Activated naive CD4-positive, alpha-beta T cell treated with anti-CD3 and anti-CD28 coated beads for 36 hours (primary cell): ENCODE measurements at regions of chr19 and their contacts with region 1.

Region 1: DNA sequence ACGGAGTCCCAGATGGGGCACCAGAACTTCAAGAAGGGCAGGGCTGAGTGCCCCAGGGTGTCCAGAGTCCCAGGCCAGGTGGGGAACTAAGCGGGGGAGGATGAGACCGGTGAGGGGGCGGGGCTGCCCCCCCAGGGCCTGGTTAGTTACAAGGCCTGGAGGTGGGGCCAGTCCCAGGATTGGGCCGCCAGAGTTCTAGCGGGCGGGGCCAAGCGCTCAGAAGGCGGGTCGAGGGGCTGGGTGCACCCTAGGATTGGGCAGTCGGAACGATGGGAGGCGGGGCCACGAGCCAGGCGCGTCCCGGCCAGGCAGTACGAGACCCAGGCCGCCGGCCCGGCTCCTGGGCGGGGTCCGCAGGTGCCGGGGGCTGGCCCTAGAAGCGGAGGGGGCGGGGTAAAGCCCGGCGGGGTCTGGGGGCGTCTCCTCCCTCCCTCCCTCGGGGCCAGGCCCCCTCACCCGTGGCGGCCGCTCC is 571 bp downstream of the ZNF653 start:
- DNase-seq: peak; percentile 95
- H3K4me3 Mint-ChIP-seq: peak overlapping the region; percentile 86
- H3K27ac Mint-ChIP-seq: peak overlapping the region; percentile 36
- H3K4me1 Mint-ChIP-seq: peaks cover 15% of the 10 kb centered on the region
- H3K27me3 Mint-ChIP-seq: no peaks in the 10 kb centered on the region

Region 2: GRCh38 chr19:11155373-11156120 is 349.5 kb before region 1 on chr19 and contains the start of gene SPC24:
- CTCF ChIA-PET with region 1: no interaction called
- intact Hi-C with region 1: loop called (anchors 1 kb)
- DNase-seq: peak; percentile 97
- H3K4me3 Mint-ChIP-seq: peak within 1 kb of the TSS; percentile 80
- H3K27ac Mint-ChIP-seq: peak within 1 kb of the TSS; percentile 89
- H3K4me1 Mint-ChIP-seq: peaks cover 10% of the 10 kb centered on the region
- H3K27me3 Mint-ChIP-seq: no peaks in the 10 kb centered on the region
- total RNA-seq, gene SPC24: 94.7 to 102 TPM

Region 3: DNA sequence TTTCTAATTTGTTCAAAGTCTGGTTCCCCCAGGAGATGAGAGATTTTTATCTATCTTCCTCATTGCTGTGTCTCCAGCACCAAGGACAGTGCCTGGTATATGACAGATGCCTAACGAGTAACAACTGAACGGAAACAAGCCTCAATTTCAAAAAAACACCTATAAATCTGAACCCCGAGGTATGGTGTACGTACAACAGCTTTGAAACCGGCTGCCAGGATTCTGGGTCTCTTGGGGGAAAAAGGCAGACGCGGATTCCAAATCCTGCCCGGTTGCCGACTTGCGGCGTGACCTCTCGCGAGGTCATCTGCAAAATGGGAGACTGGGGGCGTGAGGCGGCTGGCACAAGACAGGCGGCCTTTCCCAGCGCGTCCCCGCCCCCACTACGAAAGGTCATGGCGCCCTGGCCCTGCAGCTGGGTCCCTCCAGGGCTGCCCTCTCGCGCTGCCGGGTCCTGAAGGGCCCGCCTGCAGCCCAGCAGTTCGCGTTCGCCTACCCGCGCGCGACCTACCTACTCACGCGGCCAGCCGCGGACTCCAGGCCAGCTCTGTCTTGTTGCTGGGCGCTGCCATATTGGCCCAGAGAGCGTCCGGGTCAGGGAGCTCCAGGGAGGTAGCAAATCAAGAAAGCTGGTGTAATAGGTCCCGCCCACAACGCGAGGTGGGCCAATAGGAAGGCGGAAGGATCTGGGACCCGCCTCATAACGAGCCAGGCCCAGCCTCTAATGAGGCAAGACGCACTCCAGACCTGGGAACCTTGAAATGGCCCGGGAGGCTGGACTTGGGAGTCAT is 23.7 kb after region 1 on chr19 and contains the start of gene ECSIT:
- CTCF ChIA-PET with region 1: no interaction called
- intact Hi-C with region 1: loop called (anchors 1 kb)
- DNase-seq: peak; percentile 97
- H3K4me3 Mint-ChIP-seq: peak within 1 kb of the TSS; percentile 97
- H3K27ac Mint-ChIP-seq: peak within 1 kb of the TSS; percentile 90
- H3K4me1 Mint-ChIP-seq: peaks cover 26% of the 10 kb centered on the region
- H3K27me3 Mint-ChIP-seq: no peaks in the 10 kb centered on the region
- total RNA-seq, gene ECSIT: 42.6 to 46.0 TPM

Region 4: GRCh38 chr19:11570039-11570462 is 65.0 kb after region 1 on chr19:
- CTCF ChIA-PET with region 1: no interaction called
- intact Hi-C with region 1: no loop called
- DNase-seq: no peak
- H3K4me3 Mint-ChIP-seq: no peak overlapping the region
- H3K27ac Mint-ChIP-seq: no peak overlapping the region
- H3K4me1 Mint-ChIP-seq: peaks cover 3% of the 10 kb centered on the region
- H3K27me3 Mint-ChIP-seq: no peaks in the 10 kb centered on the region

Region 5: GRCh38 chr19:11581740-11582139 is 76.7 kb after region 1 on chr19:
- CTCF ChIA-PET with region 1: no interaction called
- intact Hi-C with region 1: loop called (anchors 1 kb)
- DNase-seq: peak; percentile 82
- H3K4me3 Mint-ChIP-seq: peak overlapping the region; percentile 51
- H3K27ac Mint-ChIP-seq: peak overlapping the region; percentile 95
- H3K4me1 Mint-ChIP-seq: peaks cover 29% of the 10 kb centered on the region
- H3K27me3 Mint-ChIP-seq: no peaks in the 10 kb centered on the region

Region 6: DNA sequence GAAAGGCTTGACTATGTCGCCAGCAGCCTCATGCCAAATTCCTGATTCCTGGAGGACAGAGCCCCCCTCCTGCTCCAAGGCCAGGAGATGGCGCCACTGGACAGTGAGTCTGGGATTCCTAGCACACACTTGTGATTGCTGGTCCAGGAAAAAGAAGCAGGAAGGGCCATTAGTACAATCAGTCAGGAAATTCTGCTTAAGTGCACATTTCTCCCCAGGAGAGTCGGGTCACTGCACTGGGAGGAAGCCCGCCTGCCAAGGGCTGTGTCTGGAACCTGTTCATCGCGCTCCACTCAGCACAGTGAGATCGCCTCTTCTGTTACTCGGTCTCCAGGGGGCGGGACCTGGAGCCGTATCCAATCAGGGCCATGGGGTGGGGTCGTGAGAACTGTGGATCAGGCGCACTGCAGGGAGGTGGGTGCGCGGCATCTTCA is 168.6 kb after region 1 on chr19:
- CTCF ChIA-PET with region 1: no interaction called
- intact Hi-C with region 1: no loop called
- DNase-seq: peak; percentile 57
- H3K4me3 Mint-ChIP-seq: peak overlapping the region; percentile 18
- H3K27ac Mint-ChIP-seq: no peak overlapping the region
- H3K4me1 Mint-ChIP-seq: peaks cover 3% of the 10 kb centered on the region
- H3K27me3 Mint-ChIP-seq: peaks cover 20% of the 10 kb centered on the region